ENCODE measurements at regions of chr1 and their contacts with region 1.

Region 1: GRCh38 chr1:19485362-19486187 is at the start of gene CAPZB:
- DNase-seq: peak; percentile 80 to 96
- H3K4me3 ChIP-seq: peak within 1 kb of the TSS; percentile 96 to 99
- H3K27ac ChIP-seq: peak within 1 kb of the TSS; percentile 97 to 99
- H3K4me1 ChIP-seq: peaks cover 20 to 47% of the 10 kb centered on the region in 2 donors
- H3K27me3 ChIP-seq: no peaks in the 10 kb centered on the region
- CTCF ChIP-seq: no peak
- total RNA-seq, gene CAPZB: 102 TPM

Region 2: DNA sequence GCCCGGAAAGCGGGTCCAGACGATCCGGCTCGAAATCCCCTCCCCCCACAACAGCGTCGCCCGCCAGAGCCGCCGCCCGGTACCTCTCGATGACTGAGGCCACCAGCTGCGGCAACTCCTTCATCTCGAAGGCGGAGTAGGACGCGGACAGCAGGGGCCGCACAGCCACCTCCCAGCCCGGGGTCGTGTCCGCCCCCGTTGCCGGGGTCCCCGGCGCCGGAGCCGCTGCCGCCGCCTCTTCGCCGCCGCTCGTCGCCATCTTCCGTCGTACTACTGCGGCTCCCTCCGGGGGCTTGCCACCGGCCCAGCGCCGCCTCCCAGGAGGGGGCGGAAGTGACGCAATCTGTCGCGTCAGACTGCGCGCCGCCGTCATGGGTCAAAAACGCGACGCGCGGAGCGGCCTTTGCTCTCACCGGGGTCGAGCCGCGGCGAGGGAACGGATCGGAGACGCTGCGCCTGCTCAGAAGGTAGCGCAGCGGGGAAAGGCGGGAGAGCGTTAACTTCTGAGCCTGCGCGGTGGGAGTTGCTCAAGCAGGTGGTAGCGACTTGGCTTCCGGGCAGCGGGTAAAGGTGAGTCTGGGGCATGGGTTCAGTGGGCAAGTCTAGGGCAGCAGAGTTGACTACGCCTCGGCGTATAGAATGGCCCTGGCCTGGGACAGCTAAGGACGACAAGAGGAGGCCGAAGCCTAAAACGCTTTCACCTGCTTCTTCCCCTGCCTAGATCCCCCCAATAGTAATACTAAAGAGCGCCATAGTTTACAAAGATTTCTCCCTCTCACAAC is 275.4 kb before region 1 on chr1 and contains the start of gene UBR4:
- intact Hi-C with region 1: loop called (anchors 10 kb)
- DNase-seq: peak; percentile 57 to 96
- H3K4me3 ChIP-seq: peak within 1 kb of the TSS; percentile 67 to 75
- H3K27ac ChIP-seq: peak within 1 kb of the TSS; percentile 90 to 95
- H3K4me1 ChIP-seq: peaks cover 6 to 29% of the 10 kb centered on the region in 2 donors
- H3K27me3 ChIP-seq: no peaks in the 10 kb centered on the region
- CTCF ChIP-seq: peak in 1 of 3 experiments; percentile 8
- total RNA-seq, gene UBR4: 222 TPM

Region 3: DNA sequence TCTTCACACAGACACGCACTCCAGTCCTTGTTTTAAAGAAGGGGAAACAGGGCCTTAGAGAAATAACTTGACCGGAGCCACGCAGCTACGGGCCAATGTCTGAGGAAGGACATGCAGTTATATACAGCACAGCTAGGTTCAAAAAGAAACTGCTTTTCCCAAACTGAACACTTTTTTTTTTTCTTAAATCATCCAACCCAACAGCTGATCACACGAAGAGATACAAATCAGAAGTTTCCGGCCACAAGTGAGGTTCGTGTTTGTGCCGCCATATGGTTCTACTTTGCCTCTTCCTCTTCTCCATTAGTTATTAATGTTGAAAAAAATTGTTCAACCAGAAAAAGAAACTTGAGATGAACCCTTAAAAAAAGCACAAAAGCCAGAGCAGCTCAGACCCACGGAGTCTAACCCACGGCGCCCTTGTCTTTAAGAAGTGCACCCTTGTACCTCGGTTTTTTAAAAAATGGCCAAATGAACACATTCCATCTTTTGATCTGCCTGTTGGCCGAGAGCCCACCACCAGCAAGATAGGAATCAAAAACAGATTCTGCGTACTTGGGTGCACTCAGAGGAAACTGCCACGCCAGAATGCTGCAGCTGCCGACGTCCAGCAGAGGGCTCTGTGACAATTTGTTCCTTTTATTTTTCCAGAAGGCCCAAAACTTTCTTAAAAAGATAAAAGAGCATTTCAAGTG is 94.5 kb before region 1 on chr1:
- intact Hi-C with region 1: loop called (anchors 1 kb)
- DNase-seq: peak in 1 of 2 donors; percentile 84
- H3K4me3 ChIP-seq: peak overlapping the region; percentile 28 to 54
- H3K27ac ChIP-seq: peak overlapping the region; percentile 77 to 81
- H3K4me1 ChIP-seq: peaks cover 15 to 72% of the 10 kb centered on the region in 2 donors
- H3K27me3 ChIP-seq: no peaks in the 10 kb centered on the region
- CTCF ChIP-seq: peak; percentile 72 to 89 (median 85)

Region 4: GRCh38 chr1:19454265-19455146 is 31.1 kb before region 1 on chr1:
- intact Hi-C with region 1: loop called (anchors 2 kb)
- DNase-seq: no peak
- H3K4me3 ChIP-seq: peak overlapping the region in 1 of 2 donors; percentile 12
- H3K27ac ChIP-seq: peak overlapping the region; percentile 89 to 93
- H3K4me1 ChIP-seq: peaks cover 44 to 92% of the 10 kb centered on the region in 2 donors
- H3K27me3 ChIP-seq: no peaks in the 10 kb centered on the region
- CTCF ChIP-seq: no peak

Region 5: DNA sequence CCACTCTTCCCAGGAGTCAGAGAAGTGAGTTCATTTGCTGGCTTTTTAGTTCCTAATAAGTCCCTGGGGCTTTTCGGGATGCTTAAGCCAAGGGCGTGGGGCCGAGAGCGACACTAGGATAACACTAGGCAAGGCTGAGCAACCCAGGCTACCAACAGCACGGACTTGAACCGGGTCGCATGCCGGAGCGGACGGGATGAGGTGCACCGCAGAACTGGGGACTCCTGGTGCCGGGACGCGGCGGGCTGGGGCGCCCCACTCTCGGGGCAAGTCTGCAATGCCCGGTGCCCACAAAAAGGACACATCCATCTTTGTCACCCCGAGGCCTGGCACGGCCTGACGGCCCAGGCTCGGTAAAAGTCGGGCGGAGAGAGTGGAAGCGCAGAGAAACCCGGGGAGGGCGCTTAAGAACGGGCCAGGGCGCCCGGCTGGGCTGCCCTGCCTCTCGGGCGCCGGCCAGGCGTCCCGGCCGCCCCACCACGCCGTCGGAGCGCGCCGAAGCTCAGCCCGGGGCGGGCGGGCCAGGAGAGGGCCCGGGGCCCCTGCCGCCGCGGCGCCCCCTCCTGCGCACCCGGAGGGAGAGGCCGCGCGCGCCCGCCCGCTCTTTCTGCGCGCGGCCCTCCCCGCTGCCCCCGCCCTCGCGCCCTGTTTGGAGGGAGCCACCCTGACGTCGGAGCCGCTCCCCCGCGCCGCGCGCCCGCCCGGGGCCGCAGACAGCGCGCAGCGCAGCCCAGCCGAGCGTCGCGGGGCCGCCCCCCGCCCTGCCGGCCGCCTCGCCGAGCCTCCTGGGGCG is 158.2 kb after region 1 on chr1 and contains the start of gene NBL1:
- intact Hi-C with region 1: loop called (anchors 2 kb)
- DNase-seq: peak in 1 of 2 donors; percentile 81
- H3K4me3 ChIP-seq: peak within 1 kb of the TSS; percentile 67 to 75
- H3K27ac ChIP-seq: peak within 1 kb of the TSS; percentile 90 to 91
- H3K4me1 ChIP-seq: peaks cover 18 to 36% of the 10 kb centered on the region in 2 donors
- H3K27me3 ChIP-seq: no peaks in the 10 kb centered on the region
- CTCF ChIP-seq: no peak
- total RNA-seq, gene NBL1: 157 TPM

Region 6: DNA sequence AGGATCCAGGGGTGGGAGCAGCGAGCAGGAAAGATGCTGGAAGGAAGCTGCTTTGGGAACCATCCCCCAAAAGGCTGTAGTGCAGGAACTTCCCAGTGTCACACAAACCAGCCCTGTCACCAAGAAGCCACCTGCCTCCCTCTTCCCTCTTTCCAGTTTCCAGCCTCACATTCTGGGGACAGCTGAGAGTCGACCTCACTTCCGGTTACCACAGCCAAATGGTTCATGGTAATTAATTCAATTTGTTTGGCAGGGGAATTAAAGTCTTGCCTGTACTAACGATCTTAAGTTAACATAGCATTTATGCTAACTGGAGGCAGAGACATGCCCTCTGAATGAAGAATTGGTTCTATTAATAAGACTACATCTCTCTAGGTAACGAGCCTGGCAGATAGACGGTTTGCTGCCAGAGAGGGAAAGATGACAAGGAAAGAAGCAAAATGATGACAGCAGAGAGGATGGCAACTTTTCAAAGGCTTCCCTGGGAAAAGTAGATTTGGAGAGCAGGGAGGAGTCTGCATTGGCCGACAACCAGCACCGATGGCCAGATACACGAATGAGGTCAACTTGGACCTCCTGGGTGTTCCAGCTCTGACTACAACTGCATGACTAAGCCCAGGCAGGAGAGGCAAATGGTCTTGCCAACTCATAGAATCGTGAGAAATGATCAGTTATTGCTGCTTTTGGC is 250.0 kb after region 1 on chr1:
- intact Hi-C with region 1: no loop called
- DNase-seq: peak; percentile 76 to 92
- H3K4me3 ChIP-seq: no peak overlapping the region
- H3K27ac ChIP-seq: peak overlapping the region; percentile 85 to 95
- H3K4me1 ChIP-seq: peaks cover 8 to 35% of the 10 kb centered on the region in 2 donors
- H3K27me3 ChIP-seq: no peaks in the 10 kb centered on the region
- CTCF ChIP-seq: no peak